ENCODE measurements at regions of chr1 and their contacts with region 1.

Region 1: DNA sequence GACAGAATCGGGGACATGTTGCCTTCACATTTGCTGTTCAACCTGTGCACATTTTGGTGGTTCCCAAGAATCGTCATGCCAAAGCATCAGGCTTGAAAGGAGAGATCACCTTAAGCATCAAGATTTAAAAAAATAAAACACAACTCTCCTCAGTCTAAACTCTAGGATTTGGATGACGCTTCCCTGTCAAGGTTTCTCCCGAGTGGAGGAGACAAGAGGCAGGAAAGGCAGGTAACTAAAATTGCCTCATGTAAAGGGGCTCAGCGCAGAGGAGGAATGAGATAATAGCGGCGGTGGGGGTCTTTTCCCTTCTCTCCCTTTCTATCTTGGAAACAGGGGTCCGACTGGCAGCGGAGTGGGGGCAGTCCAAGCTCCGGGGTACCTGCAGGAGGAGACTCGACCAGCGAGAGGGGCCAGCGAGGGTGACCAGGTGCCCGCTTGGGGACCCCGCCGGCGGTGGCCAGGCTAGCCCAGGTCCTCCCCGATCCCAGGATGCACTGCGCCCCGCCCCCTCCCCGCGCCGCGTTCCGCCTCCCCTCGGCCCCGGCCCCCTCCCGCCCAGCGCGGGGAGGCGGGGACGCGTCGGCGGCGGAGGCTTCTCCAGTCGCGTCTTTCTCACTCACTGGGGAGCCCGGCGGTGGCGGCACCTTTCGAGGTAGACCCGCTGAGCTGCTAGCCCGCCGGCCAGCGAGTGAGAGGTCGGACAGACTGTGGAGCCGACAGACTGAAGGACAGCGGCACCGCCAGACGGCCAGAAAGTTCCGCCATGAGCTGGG is at the start of gene FNBP1L:
- DNase-seq: peak; percentile 73
- H3K4me3 ChIP-seq: peak within 1 kb of the TSS; percentile 71 to 89 (median 75)
- H3K27ac ChIP-seq: peak within 1 kb of the TSS; percentile 51
- H3K4me1 ChIP-seq: peaks cover 11% of the 10 kb centered on the region
- H3K27me3 ChIP-seq: no peaks in the 10 kb centered on the region
- CTCF ChIP-seq: no peak
- total RNA-seq, gene FNBP1L: 22.1 to 39.2 TPM

Region 2: DNA sequence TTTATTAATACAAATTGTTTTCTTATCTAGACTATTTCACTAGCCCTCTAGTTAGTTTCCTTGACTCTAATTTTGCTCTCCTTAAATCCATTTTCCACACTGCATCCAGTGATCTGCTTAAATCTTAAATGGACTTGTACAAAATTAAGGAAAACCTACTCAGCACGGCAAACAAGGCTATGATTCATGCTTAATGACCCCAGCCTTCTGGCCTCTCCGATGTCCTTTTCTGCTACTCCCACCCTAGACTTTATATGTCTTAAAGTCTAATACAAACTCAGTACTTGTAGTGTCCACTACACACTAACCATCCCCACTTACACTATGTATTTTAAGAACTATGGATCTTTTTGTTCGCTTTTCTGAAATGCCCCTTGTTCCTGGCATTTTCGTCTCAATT is 269.7 kb before region 1 on chr1:
- CTCF ChIA-PET with region 1: no interaction called
- dilution Hi-C with region 1: no loop called
- in situ Hi-C with region 1: no loop called
- intact Hi-C with region 1: no loop called
- DNase-seq: peak; percentile 16
- H3K4me3 ChIP-seq: peak overlapping the region; percentile 85 to 100 (median 98)
- H3K27ac ChIP-seq: peak overlapping the region; percentile 94
- H3K4me1 ChIP-seq: peaks cover 15% of the 10 kb centered on the region
- H3K27me3 ChIP-seq: no peaks in the 10 kb centered on the region
- CTCF ChIP-seq: no peak

Region 3: DNA sequence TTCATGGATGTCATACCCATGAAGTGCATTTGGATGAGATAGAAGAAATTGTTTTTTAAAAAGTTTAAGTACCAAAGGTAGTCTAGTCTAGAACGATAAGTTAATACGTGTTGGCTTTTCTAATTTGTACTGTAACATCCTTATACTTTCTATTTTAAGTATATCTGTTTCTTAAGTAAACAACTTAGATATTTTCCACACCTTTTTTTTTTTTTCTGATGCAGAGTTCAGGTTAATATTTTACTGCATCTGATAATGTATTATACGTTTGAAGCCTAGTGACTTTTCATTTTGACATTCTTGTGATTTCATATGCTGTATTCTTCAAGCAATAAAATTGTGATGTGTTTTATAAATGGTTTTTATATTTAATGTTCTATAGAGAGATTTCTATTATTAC is 85.5 kb before region 1 on chr1:
- CTCF ChIA-PET with region 1: no interaction called
- dilution Hi-C with region 1: no loop called
- in situ Hi-C with region 1: no loop called
- intact Hi-C with region 1: no loop called
- DNase-seq: no peak
- H3K4me3 ChIP-seq: no peak overlapping the region
- H3K27ac ChIP-seq: no peak overlapping the region
- H3K4me1 ChIP-seq: no peaks in the 10 kb centered on the region
- H3K27me3 ChIP-seq: no peaks in the 10 kb centered on the region
- CTCF ChIP-seq: no peak

Region 4: DNA sequence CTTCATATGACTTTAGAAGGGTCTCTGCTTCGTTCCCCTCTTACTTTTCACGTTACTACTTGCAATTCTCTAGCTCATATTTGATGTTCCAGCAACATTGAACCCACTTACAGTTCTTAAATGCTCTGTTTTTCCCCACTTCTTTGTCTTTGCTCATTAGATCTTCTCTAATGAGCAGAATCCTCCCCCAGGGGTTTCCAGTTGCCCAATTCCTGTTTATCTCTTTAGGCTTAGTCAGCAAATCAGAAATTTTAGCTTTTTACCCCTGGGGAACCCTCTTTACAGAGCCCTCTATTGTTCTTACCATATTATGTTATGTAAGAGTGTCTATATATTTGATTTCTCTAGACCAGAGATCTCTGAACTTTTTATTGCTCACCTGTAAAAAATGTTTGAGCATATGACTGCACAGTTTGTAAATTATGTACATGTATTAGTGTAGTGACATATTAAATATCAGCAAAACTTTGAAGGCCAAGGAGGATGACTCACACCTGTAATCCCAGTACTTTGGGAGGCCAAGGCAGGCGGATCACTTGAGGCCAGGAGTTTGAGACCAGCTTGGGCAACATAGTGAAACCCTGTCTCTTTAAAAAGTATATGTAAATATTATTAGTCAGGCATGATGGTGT is 71.6 kb after region 1 on chr1:
- CTCF ChIA-PET with region 1: no interaction called
- dilution Hi-C with region 1: no loop called
- in situ Hi-C with region 1: no loop called
- intact Hi-C with region 1: loop called (anchors 2 kb)
- DNase-seq: peak; percentile 84
- H3K4me3 ChIP-seq: no peak overlapping the region
- H3K27ac ChIP-seq: peak overlapping the region; percentile 47
- H3K4me1 ChIP-seq: peaks cover 16% of the 10 kb centered on the region
- H3K27me3 ChIP-seq: no peaks in the 10 kb centered on the region
- CTCF ChIP-seq: no peak

Region 5: GRCh38 chr1:93579891-93580290 is 132.2 kb after region 1 on chr1:
- CTCF ChIA-PET with region 1: no interaction called
- dilution Hi-C with region 1: no loop called
- in situ Hi-C with region 1: loop called in 1 of 2 experiments (anchors 10 kb)
- intact Hi-C with region 1: no loop called
- DNase-seq: peak; percentile 87
- H3K4me3 ChIP-seq: no peak overlapping the region
- H3K27ac ChIP-seq: peak overlapping the region; percentile 56
- H3K4me1 ChIP-seq: peaks cover 78% of the 10 kb centered on the region
- H3K27me3 ChIP-seq: no peaks in the 10 kb centered on the region
- CTCF ChIP-seq: no peak

Region 6: DNA sequence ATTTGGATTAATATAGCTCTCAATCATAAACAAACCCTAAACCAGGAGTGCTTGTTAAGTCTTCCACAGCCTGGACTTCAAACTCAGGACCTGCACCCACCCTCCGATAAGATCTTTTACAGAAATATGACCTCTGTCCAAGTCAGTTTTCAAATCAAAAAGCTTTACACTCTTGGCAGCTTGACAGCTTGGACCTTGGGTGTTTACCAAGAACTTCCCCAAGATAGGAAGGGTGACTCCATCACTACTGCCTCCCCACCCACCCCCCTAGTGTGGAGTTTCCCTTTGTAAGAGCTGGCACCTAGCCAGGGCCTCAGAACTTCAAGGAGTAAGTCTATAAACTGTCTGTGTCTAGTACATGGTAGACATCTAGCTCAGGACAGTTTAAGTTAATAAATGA is 224.4 kb after region 1 on chr1:
- CTCF ChIA-PET with region 1: no interaction called
- dilution Hi-C with region 1: no loop called
- in situ Hi-C with region 1: no loop called
- intact Hi-C with region 1: no loop called
- DNase-seq: peak; percentile 42
- H3K4me3 ChIP-seq: no peak overlapping the region
- H3K27ac ChIP-seq: no peak overlapping the region
- H3K4me1 ChIP-seq: peaks cover 70% of the 10 kb centered on the region
- H3K27me3 ChIP-seq: no peaks in the 10 kb centered on the region
- CTCF ChIP-seq: no peak

Region 7: GRCh38 chr1:93839307-93839706 is 391.6 kb after region 1 on chr1:
- CTCF ChIA-PET with region 1: interaction called, 7 read pairs
- dilution Hi-C with region 1: no loop called
- in situ Hi-C with region 1: loop called (anchors 10 kb)
- intact Hi-C with region 1: loop called (anchors 1 kb)
- DNase-seq: peak; percentile 71
- H3K4me3 ChIP-seq: no peak overlapping the region
- H3K27ac ChIP-seq: no peak overlapping the region
- H3K4me1 ChIP-seq: peaks cover 30% of the 10 kb centered on the region
- H3K27me3 ChIP-seq: no peaks in the 10 kb centered on the region
- CTCF ChIP-seq: no peak

Measured in mammary epithelial cell (primary cell).